ENCODE measurements at regions of chr5 and their contacts with region 1.

Region 1: GRCh38 chr5:79513704-79514390 is at the start of gene HOMER1:
- DNase-seq: peak; percentile 88
- H3K4me3 ChIP-seq: peak within 1 kb of the TSS; percentile 85
- H3K27ac ChIP-seq: peak within 1 kb of the TSS; percentile 96
- H3K4me1 ChIP-seq: peaks cover 43% of the 10 kb centered on the region
- H3K27me3 ChIP-seq: no peaks in the 10 kb centered on the region
- CTCF ChIP-seq: no peak
- total RNA-seq, gene HOMER1: 34.0 and 37.0 TPM in 2 replicates

Region 2: DNA sequence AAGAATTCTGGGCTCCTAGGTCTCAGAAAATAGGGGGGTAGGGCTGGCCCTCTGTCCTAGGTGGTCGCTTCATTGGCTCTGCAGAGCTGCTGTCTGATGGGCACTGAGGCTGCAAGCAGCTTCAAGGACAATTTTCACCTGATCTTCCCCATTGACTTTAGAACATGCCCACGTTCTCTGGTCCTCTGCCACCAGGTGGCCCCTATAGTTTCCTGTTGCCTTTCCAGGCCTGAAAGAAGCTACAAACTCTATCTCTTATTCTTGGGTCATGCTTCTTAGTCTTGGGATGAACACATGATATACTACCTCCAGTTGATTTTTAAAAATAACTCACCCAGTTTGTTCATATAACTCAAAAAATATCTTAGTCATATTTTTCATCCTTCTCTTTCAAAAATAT is 832.2 kb after region 1 on chr5:
- CTCF ChIA-PET with region 1: no interaction called
- POLR2A ChIA-PET with region 1: interaction called, 14 read pairs
- intact Hi-C with region 1: no loop called
- DNase-seq: peak; percentile 30
- H3K4me3 ChIP-seq: no peak overlapping the region
- H3K27ac ChIP-seq: no peak overlapping the region
- H3K4me1 ChIP-seq: no peaks in the 10 kb centered on the region
- H3K27me3 ChIP-seq: no peaks in the 10 kb centered on the region
- CTCF ChIP-seq: peak; percentile 54